ENCODE measurements at regions of chr19 and their contacts with region 1.

Region 1: DNA sequence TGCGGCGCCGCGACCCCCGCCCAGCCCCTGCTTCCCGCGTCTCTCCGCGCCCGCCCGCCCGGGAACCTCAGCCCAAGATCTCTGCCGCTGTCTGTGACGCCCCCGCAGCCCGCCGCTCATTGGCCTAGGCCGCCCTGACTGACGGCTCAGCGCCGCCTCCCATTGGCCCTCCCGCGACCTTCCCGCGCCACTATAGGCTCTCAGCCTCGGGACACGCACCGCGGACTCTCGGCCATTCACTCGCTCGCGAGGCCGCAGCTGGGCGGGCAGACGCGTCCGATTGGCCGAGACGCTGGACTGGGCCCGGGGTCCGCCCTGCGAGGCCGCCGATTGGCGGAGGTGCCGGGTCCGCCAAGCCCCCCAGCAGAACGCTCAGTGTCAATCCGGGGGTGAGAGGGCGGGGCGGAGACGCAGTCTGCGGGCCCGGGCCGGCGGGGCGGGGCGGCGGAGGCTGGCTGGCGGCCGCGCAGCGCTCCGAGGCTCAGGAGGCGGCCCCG is at the start of gene PRKACA:
- DNase-seq: peak; percentile 99
- H3K4me3 Mint-ChIP-seq: peak within 1 kb of the TSS; percentile 96
- H3K27ac Mint-ChIP-seq: peak within 1 kb of the TSS; percentile 95
- H3K4me1 Mint-ChIP-seq: peaks cover 28% of the 10 kb centered on the region
- H3K27me3 Mint-ChIP-seq: no peaks in the 10 kb centered on the region
- total RNA-seq, gene PRKACA: 75.4 and 76.8 TPM in 2 replicates

Region 2: GRCh38 chr19:14073261-14073924 is 44.3 kb before region 1 on chr19:
- intact Hi-C with region 1: loop called (anchors 2 kb)
- DNase-seq: peak; percentile 77
- H3K4me3 Mint-ChIP-seq: peak overlapping the region; percentile 97
- H3K27ac Mint-ChIP-seq: peak overlapping the region; percentile 93
- H3K4me1 Mint-ChIP-seq: peaks cover 8% of the 10 kb centered on the region
- H3K27me3 Mint-ChIP-seq: no peaks in the 10 kb centered on the region

Region 3: GRCh38 chr19:14081325-14082093 is 36.2 kb before region 1 on chr19:
- intact Hi-C with region 1: loop called (anchors 2 kb)
- DNase-seq: peak; percentile 99
- H3K4me3 Mint-ChIP-seq: peak overlapping the region; percentile 93
- H3K27ac Mint-ChIP-seq: peak overlapping the region; percentile 93
- H3K4me1 Mint-ChIP-seq: peaks cover 7% of the 10 kb centered on the region
- H3K27me3 Mint-ChIP-seq: no peaks in the 10 kb centered on the region

Measured in activated T-helper 2 cell treated with anti-CD3 and anti-CD28 coated beads, Interferon-gamma antibody, Interleukin-2, Interleukin-4, amounts not matched to agents 10 μg/mL and 5 μg/mL and 100 μg/mL, durations not matched to agents 14 hours and 24 hours and 36 hours (primary cell).